MCF 10A (cell line): ENCODE measurements at regions of chr1 and their contacts with region 1.

Region 1: DNA sequence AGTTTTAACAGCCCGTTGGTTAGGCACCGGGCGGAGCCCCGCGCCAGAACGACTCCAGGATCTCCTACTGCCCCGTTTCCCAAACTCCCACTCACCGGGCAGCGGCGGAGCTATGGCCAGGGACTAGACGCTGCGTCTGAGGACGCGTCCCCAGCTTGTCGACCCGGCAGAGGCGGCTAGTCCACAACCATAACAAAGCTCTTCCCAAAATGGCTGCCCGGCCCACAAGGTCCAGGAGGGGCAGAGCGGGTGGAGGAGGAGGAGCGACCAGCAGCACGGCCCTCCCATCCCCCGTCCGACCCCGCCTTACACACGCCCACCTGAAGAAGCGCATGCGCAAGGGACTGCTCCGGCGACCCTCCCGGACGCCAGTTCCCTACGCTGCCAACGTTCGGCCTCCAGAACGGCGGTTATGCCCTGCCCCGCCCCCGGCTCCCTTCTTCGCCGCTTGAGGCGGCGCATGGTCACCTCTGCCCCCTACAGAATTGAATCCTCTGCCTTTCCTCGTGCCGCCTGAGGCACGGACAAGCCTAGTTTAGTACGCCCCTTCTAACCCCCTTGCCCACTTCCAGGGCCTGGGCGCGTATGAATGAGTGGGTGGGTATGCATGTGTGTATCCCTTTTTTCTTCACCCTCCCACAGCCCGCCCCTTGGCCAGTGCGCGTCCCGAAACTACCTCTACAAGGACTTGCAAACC is at the start of gene GPBP1L1:
- DNase-seq: peak; percentile 97
- H3K4me3 Mint-ChIP-seq: peak within 1 kb of the TSS; percentile 91
- H3K27ac Mint-ChIP-seq: peak within 1 kb of the TSS; percentile 100
- H3K4me1 Mint-ChIP-seq: peaks cover 19% of the 10 kb centered on the region
- H3K27me3 Mint-ChIP-seq: no peaks in the 10 kb centered on the region
- CTCF ChIP-seq: no peak
- total RNA-seq, gene GPBP1L1: 105 and 116 TPM in 2 replicates

Region 2: DNA sequence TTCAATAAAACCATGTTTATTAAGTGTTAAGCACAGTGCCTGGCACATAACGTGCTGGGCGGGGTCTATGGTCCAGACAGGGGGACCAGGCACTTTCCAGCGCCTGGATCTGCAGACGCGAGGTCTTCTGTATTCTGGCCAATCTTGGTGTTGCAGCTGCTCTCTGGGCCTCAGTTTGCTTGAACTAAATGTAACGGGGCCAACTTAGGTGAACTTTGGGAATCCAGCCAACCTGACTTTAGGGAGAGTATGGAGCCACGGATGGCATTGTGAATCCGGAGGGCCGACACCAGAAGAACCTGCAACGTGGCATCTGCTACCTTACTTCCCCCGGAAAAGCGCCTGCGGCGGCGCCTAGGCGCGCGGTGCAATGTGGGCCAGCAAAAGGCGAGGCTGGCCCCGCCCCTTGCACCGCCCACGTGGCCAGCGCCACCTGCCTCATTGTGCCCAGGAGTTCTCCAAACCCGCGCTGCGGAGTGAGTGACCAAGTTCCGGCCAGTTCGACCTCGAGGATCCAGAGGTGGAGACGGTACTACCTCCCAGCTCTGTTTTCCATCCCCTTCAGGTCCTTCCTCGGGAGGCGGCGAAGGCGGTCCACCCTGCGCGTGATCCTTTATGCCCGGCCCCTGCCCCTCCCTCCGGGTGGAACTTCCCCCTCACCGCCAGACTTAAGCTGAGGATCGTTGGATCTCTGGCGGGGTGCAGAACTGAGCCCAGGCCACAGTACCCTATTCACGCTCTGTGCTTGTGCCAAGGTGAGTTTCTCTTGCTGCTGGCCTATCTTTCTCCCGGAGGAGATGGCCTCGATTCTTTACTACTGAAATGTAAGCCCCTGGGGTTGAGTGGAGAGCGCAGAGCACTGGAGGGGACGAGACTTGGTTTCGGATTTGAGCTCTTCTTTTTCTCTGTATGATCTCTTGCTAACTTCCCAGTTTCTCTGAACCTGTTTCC is 135.8 kb before region 1 on chr1 and contains the start of gene AKR1A1:
- CTCF ChIA-PET with region 1: no interaction called
- POLR2A ChIA-PET with region 1: interaction called, 16 read pairs
- intact Hi-C with region 1: no loop called
- DNase-seq: peak; percentile 94
- H3K4me3 Mint-ChIP-seq: peak within 1 kb of the TSS; percentile 97
- H3K27ac Mint-ChIP-seq: peak within 1 kb of the TSS; percentile 94
- H3K4me1 Mint-ChIP-seq: peaks cover 12% of the 10 kb centered on the region
- H3K27me3 Mint-ChIP-seq: no peaks in the 10 kb centered on the region
- CTCF ChIP-seq: no peak
- total RNA-seq, gene AKR1A1: 108 and 142 TPM in 2 replicates

Region 3: GRCh38 chr1:45643978-45644377 is 42.5 kb before region 1 on chr1:
- CTCF ChIA-PET with region 1: no interaction called
- POLR2A ChIA-PET with region 1: interaction called, 10 read pairs
- intact Hi-C with region 1: loop called (anchors 1 kb)
- DNase-seq: no peak
- H3K4me3 Mint-ChIP-seq: no peak overlapping the region
- H3K27ac Mint-ChIP-seq: no peak overlapping the region
- H3K4me1 Mint-ChIP-seq: peaks cover 3% of the 10 kb centered on the region
- H3K27me3 Mint-ChIP-seq: no peaks in the 10 kb centered on the region
- CTCF ChIP-seq: no peak

Region 4: DNA sequence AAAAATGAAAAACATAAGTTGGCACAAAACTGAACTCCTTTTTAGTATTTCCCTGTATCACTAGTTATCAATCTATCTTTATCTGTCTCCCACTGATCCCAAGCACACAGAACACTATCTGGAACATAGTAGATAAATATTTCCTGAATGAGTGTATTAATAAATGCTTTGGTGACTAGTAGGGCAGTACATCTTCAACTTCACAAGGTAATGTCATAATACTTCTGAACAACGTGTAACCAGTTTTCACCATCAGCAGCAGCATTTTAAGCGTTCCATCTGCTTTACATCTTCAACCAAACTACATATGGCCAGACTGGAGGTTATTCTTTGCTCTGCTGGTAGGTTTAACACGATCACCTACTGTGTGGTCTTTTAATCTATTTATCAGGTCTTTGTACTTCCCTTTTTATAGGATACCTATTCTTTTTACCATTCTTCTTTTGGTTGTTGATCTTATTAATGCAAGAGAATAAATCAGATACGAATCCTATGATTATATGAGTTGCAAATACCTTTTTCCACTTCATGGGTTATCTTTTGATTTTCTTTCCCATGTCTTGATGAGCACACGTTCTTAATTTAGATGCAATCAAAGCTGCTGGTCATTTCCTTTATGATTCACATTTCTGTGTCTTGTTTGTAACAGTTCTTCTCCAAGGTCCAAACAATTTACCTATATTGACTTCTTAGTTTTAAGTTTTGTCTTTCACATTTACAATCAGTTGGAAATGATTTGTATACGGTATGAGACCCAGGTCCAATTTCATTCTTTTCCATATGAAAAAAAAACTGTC is 16.4 kb before region 1 on chr1:
- CTCF ChIA-PET with region 1: no interaction called
- POLR2A ChIA-PET with region 1: interaction called, 32 read pairs
- intact Hi-C with region 1: no loop called
- DNase-seq: no peak
- H3K4me3 Mint-ChIP-seq: no peak overlapping the region
- H3K27ac Mint-ChIP-seq: no peak overlapping the region
- H3K4me1 Mint-ChIP-seq: peaks cover 30% of the 10 kb centered on the region
- H3K27me3 Mint-ChIP-seq: no peaks in the 10 kb centered on the region
- CTCF ChIP-seq: no peak

Region 5: GRCh38 chr1:45767035-45767434 is 80.6 kb after region 1 on chr1:
- CTCF ChIA-PET with region 1: no interaction called
- POLR2A ChIA-PET with region 1: no interaction called
- intact Hi-C with region 1: no loop called
- DNase-seq: no peak
- H3K4me3 Mint-ChIP-seq: no peak overlapping the region
- H3K27ac Mint-ChIP-seq: no peak overlapping the region
- H3K4me1 Mint-ChIP-seq: no peaks in the 10 kb centered on the region
- H3K27me3 Mint-ChIP-seq: no peaks in the 10 kb centered on the region
- CTCF ChIP-seq: no peak

Region 6: GRCh38 chr1:45803301-45803780 is 116.9 kb after region 1 on chr1 and contains the start of gene MAST2:
- CTCF ChIA-PET with region 1: no interaction called
- POLR2A ChIA-PET with region 1: interaction called, 57 read pairs
- intact Hi-C with region 1: loop called (anchors 2 kb)
- DNase-seq: peak; percentile 86
- H3K4me3 Mint-ChIP-seq: peak within 1 kb of the TSS; percentile 93
- H3K27ac Mint-ChIP-seq: peak within 1 kb of the TSS; percentile 72
- H3K4me1 Mint-ChIP-seq: peaks cover 31% of the 10 kb centered on the region
- H3K27me3 Mint-ChIP-seq: no peaks in the 10 kb centered on the region
- CTCF ChIP-seq: no peak
- total RNA-seq, gene MAST2: 33.3 and 39.2 TPM in 2 replicates

Region 7: GRCh38 chr1:46132529-46133180 is 446.2 kb after region 1 on chr1 and contains the start of gene PIK3R3:
- CTCF ChIA-PET with region 1: no interaction called
- POLR2A ChIA-PET with region 1: interaction called, 15 read pairs
- intact Hi-C with region 1: no loop called
- DNase-seq: peak; percentile 98
- H3K4me3 Mint-ChIP-seq: peak within 1 kb of the TSS; percentile 75
- H3K27ac Mint-ChIP-seq: peak within 1 kb of the TSS; percentile 100
- H3K4me1 Mint-ChIP-seq: peaks cover 43% of the 10 kb centered on the region
- H3K27me3 Mint-ChIP-seq: no peaks in the 10 kb centered on the region
- CTCF ChIP-seq: no peak
- total RNA-seq, gene PIK3R3: 8.0 and 9.3 TPM in 2 replicates

Region 8: DNA sequence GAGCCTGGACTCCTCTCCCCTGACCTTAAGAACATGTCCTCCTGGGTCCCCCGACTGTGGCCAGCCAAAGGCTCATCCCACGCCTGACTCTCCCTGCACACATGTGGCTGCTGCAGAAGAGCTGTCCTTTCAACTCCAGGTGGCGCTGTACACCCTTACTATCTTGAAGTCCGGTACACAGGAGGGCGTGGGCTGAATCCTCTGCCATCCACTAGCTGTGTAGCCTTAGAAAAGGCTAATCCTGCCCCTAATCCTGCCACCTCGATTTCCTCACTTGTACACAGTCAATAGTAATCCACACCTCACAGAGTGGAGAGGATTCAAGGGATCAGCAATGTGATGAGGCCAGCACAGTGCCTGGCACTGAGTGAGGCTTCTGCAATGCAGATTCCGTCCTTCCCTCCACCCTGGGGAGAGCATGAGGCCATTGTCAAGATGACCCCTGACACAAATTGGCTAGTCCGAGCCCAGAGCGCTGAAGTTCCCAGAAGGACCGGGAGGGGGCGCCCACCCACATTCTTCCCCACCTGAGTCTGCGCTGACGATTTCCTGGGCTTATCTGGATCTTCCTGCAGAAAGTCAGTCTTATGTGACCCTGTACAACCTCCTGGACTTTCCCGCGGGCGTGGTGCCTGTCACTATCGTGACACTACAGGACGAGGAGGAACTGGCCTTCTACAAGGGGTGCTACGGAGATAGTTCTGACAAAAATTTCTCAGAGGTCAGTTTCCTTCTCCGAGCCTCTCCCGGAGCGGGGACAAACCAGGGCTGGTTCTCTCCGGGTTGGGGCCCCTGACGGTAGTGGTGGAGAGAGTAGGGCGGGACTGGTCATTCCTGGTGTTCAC is 756.1 kb after region 1 on chr1:
- CTCF ChIA-PET with region 1: no interaction called
- POLR2A ChIA-PET with region 1: no interaction called
- intact Hi-C with region 1: no loop called
- DNase-seq: peak; percentile 94
- H3K4me3 Mint-ChIP-seq: peak overlapping the region; percentile 77
- H3K27ac Mint-ChIP-seq: no peak overlapping the region
- H3K4me1 Mint-ChIP-seq: peaks cover 13% of the 10 kb centered on the region
- H3K27me3 Mint-ChIP-seq: peaks cover 21% of the 10 kb centered on the region
- CTCF ChIP-seq: peak; percentile 85